Activated CD8-positive, alpha-beta T cell treated with anti-CD3 and anti-CD28 coated beads, Interleukin-2, amount 10 ng/mL, durations not matched to agents 7 days and 5 days (primary cell): ENCODE measurements at regions of chr6 and their contacts with region 1.

Region 1: GRCh38 chr6:135088818-135089809 is 34.5 kb upstream of the HBS1L start:
- DNase-seq: peak; percentile 62
- ATAC-seq: peak; percentile 78
- H3K4me3 Mint-ChIP-seq: peak overlapping the region; percentile 69
- H3K27ac Mint-ChIP-seq: peak overlapping the region; percentile 88
- H3K4me1 Mint-ChIP-seq: peaks cover 78% of the 10 kb centered on the region
- H3K27me3 Mint-ChIP-seq: no peaks in the 10 kb centered on the region

Region 2: GRCh38 chr6:135062735-135063134 is 26.4 kb before region 1 on chr6:
- CTCF ChIA-PET with region 1: interaction called, 15 read pairs
- POLR2A ChIA-PET with region 1: interaction called, 4 read pairs
- DNase-seq: no peak
- ATAC-seq: no peak
- H3K4me3 Mint-ChIP-seq: no peak overlapping the region
- H3K27ac Mint-ChIP-seq: no peak overlapping the region
- H3K4me1 Mint-ChIP-seq: peaks cover 6% of the 10 kb centered on the region
- H3K27me3 Mint-ChIP-seq: peaks cover 3% of the 10 kb centered on the region

Region 3: GRCh38 chr6:135114355-135115145 is 25.4 kb after region 1 on chr6:
- CTCF ChIA-PET with region 1: interaction called, 11 read pairs
- POLR2A ChIA-PET with region 1: interaction called, 6 read pairs
- DNase-seq: peak; percentile 57
- ATAC-seq: peak; percentile 79
- H3K4me3 Mint-ChIP-seq: peak overlapping the region; percentile 19
- H3K27ac Mint-ChIP-seq: peak overlapping the region; percentile 81
- H3K4me1 Mint-ChIP-seq: peaks cover 71% of the 10 kb centered on the region
- H3K27me3 Mint-ChIP-seq: no peaks in the 10 kb centered on the region

Region 4: GRCh38 chr6:135128268-135128914 is 39.3 kb after region 1 on chr6:
- CTCF ChIA-PET with region 1: interaction called, 16 read pairs
- POLR2A ChIA-PET with region 1: interaction called, 10 read pairs
- DNase-seq: peak; percentile 71
- ATAC-seq: peak; percentile 91
- H3K4me3 Mint-ChIP-seq: peak overlapping the region; percentile 49
- H3K27ac Mint-ChIP-seq: peak overlapping the region; percentile 90
- H3K4me1 Mint-ChIP-seq: peaks cover 40% of the 10 kb centered on the region
- H3K27me3 Mint-ChIP-seq: no peaks in the 10 kb centered on the region